Endothelial cell of umbilical vein (primary cell): ENCODE measurements at regions of chr1 and their contacts with region 1.

Region 1: GRCh38 chr1:197356723-197357533 is 88.9 kb downstream of the CRB1 start:
- DNase-seq: peak; percentile 49
- H3K4me3 ChIP-seq: no peak overlapping the region
- H3K27ac ChIP-seq: no peak overlapping the region
- H3K4me1 ChIP-seq: no peaks in the 10 kb centered on the region
- H3K27me3 ChIP-seq: no peaks in the 10 kb centered on the region
- CTCF ChIP-seq: peak; percentile 52 to 59
- POLR2A ChIP-seq: no peak

Region 2: GRCh38 chr1:196723322-196724185 is 633.4 kb before region 1 on chr1:
- CTCF ChIA-PET with region 1: interaction called, 30 read pairs
- POLR2A ChIA-PET with region 1: no interaction called
- dilution Hi-C with region 1: no loop called
- intact Hi-C with region 1: loop called (anchors 1 kb)
- DNase-seq: no peak
- H3K4me3 ChIP-seq: no peak overlapping the region
- H3K27ac ChIP-seq: no peak overlapping the region
- H3K4me1 ChIP-seq: no peaks in the 10 kb centered on the region
- H3K27me3 ChIP-seq: no peaks in the 10 kb centered on the region
- CTCF ChIP-seq: peak; percentile 8 to 62
- POLR2A ChIP-seq: no peak

Region 3: GRCh38 chr1:196738730-196739129 is 618.2 kb before region 1 on chr1:
- CTCF ChIA-PET with region 1: interaction called, 7 read pairs
- POLR2A ChIA-PET with region 1: no interaction called
- dilution Hi-C with region 1: no loop called
- intact Hi-C with region 1: loop called (anchors 2 kb)
- DNase-seq: no peak
- H3K4me3 ChIP-seq: no peak overlapping the region
- H3K27ac ChIP-seq: no peak overlapping the region
- H3K4me1 ChIP-seq: no peaks in the 10 kb centered on the region
- H3K27me3 ChIP-seq: no peaks in the 10 kb centered on the region
- CTCF ChIP-seq: no peak
- POLR2A ChIP-seq: no peak

Region 4: GRCh38 chr1:197180252-197180878 is 176.6 kb before region 1 on chr1:
- CTCF ChIA-PET with region 1: interaction called, 105 read pairs
- POLR2A ChIA-PET with region 1: no interaction called
- dilution Hi-C with region 1: no loop called
- intact Hi-C with region 1: loop called (anchors 1 kb)
- DNase-seq: peak; percentile 46
- H3K4me3 ChIP-seq: no peak overlapping the region
- H3K27ac ChIP-seq: no peak overlapping the region
- H3K4me1 ChIP-seq: peaks cover 6% of the 10 kb centered on the region
- H3K27me3 ChIP-seq: no peaks in the 10 kb centered on the region
- CTCF ChIP-seq: peak; percentile 32 to 47
- POLR2A ChIP-seq: no peak

Region 5: GRCh38 chr1:197224160-197224559 is 132.8 kb before region 1 on chr1:
- CTCF ChIA-PET with region 1: interaction called, 30 read pairs
- POLR2A ChIA-PET with region 1: interaction called, 4 read pairs
- dilution Hi-C with region 1: no loop called
- intact Hi-C with region 1: no loop called
- DNase-seq: no peak
- H3K4me3 ChIP-seq: no peak overlapping the region
- H3K27ac ChIP-seq: no peak overlapping the region
- H3K4me1 ChIP-seq: no peaks in the 10 kb centered on the region
- H3K27me3 ChIP-seq: no peaks in the 10 kb centered on the region
- CTCF ChIP-seq: no peak
- POLR2A ChIP-seq: no peak

Region 6: DNA sequence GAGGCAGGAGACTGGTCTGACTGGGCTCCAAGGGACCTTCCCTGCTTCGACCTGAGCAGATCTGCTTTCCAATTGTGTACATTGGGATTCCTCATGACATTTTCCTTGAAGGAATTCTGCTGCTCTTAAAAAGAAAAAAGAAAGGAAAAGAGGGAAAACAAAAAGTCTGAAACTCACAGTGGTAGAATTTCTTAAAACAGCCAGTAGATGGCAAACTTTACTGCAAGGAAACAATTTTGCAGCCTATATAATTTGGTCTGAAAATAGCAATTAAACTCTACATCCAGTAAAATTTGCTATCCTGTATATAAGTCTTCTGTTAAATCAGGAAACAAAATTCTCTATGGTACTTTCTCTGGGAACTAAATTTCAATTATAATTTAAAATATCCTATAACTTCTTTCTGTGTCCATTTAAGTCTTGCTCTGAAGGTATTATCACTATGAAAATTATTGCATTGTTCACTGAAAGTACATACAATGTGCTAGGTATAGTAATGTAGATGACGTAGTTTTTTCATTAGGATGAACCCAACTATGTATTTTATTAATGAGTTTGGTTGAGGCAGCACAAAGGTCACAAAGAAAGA is 29.1 kb before region 1 on chr1:
- CTCF ChIA-PET with region 1: interaction called, 23 read pairs
- POLR2A ChIA-PET with region 1: no interaction called
- dilution Hi-C with region 1: no loop called
- intact Hi-C with region 1: loop called (anchors 1 kb)
- DNase-seq: peak; percentile 21
- H3K4me3 ChIP-seq: no peak overlapping the region
- H3K27ac ChIP-seq: no peak overlapping the region
- H3K4me1 ChIP-seq: no peaks in the 10 kb centered on the region
- H3K27me3 ChIP-seq: peaks cover 0 to 2% of the 10 kb centered on the region in 2 experiments
- CTCF ChIP-seq: peak; percentile 28 to 44
- POLR2A ChIP-seq: no peak

Region 7: GRCh38 chr1:197343663-197344273 is 13.2 kb before region 1 on chr1:
- CTCF ChIA-PET with region 1: interaction called, 10 read pairs
- POLR2A ChIA-PET with region 1: no interaction called
- dilution Hi-C with region 1: no loop called
- intact Hi-C with region 1: no loop called
- DNase-seq: no peak
- H3K4me3 ChIP-seq: no peak overlapping the region
- H3K27ac ChIP-seq: no peak overlapping the region
- H3K4me1 ChIP-seq: no peaks in the 10 kb centered on the region
- H3K27me3 ChIP-seq: peaks cover 1 to 2% of the 10 kb centered on the region in 2 experiments
- CTCF ChIP-seq: no peak
- POLR2A ChIP-seq: no peak

Region 8: DNA sequence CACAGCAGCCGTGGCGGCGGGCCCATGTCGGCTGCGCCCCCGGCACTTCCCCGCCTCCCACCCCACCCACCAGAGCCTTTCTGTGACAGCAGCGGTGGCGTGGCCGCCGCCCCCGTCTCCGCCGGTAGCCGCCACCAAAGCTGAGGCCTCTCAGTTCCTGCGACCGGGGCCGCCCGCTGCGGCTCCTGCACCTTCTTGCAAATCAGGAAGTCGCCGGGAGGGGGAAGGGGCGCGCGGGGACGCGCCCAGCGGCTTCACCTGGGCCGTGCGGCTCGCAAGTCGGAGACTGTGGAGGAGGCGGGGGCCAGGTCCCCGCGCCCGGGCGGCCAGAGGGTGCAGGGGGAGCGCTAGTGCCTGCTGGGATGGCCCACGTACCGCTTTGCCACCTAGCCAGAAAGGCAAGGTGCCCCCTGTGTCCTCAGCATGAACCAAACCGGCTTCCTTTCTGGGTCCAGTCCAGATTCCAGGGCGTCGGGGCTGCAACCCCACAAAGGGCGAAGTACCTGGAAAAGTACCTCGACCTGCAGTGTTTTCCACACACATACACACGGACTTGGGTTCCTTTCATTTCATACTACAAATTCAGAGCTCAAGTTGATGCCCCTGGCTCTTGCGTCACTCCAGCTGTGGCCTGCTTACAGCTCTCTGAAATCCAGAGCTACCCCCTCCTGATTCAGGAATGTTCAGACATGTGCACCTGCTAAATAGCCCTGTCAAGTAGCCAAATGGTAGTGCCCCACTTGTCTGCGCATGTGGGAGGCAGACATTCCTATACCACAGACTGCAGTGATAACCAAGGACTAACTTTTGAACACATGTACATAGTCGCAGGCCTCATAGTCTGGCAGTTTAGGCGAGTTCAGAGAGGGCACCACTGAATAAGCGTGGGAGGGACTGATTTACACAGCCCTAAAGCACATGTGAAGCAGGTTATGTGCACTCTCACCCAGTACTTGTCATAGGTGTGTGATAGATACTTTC is 418.6 kb after region 1 on chr1 and contains the start of gene DENND1B:
- CTCF ChIA-PET with region 1: no interaction called
- POLR2A ChIA-PET with region 1: no interaction called
- dilution Hi-C with region 1: no loop called
- intact Hi-C with region 1: no loop called
- DNase-seq: peak; percentile 52
- H3K4me3 ChIP-seq: peak within 1 kb of the TSS; percentile 53 to 65 (median 63)
- H3K27ac ChIP-seq: peak within 1 kb of the TSS; percentile 30
- H3K4me1 ChIP-seq: peaks cover 21% of the 10 kb centered on the region
- H3K27me3 ChIP-seq: no peaks in the 10 kb centered on the region
- CTCF ChIP-seq: no peak
- POLR2A ChIP-seq: no peak
- total RNA-seq, gene DENND1B: 3.3 and 5.4 TPM in 2 replicates